H1 (cell line): ENCODE measurements at regions of chrX and their contacts with region 1.

Region 1: DNA sequence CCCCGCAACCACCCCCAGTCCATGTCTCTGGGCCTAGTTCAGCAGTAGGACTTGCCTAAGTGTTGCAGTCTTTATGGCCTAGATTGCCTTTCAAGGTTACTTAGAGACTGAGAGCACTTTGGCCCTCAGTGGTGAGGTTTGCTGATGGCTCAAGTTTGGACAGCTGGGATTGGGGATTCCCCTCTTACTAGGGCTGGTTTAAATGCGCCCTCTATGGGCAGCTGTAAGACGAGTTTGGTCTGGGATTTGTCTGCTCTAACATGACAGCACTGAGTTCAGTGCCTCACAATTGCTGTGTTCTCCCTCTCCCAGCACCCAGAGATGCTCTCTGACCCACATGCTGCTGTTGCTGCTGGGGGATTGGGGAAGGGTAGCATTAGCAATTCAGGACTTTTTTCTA is 23.1 kb downstream of the DACH2 start:
- DNase-seq: peak; percentile 23 to 44
- H3K4me3 ChIP-seq: no peak overlapping the region
- H3K27ac ChIP-seq: no peak overlapping the region
- H3K4me1 ChIP-seq: no peaks in the 10 kb centered on the region
- H3K27me3 ChIP-seq: no peaks in the 10 kb centered on the region
- CTCF ChIP-seq: peak; percentile 44 to 70 (median 59)
- EP300 ChIP-seq: no peak
- POLR2A ChIP-seq: no peak
- RAD21 ChIP-seq: peak; percentile 66 to 76

Region 2: DNA sequence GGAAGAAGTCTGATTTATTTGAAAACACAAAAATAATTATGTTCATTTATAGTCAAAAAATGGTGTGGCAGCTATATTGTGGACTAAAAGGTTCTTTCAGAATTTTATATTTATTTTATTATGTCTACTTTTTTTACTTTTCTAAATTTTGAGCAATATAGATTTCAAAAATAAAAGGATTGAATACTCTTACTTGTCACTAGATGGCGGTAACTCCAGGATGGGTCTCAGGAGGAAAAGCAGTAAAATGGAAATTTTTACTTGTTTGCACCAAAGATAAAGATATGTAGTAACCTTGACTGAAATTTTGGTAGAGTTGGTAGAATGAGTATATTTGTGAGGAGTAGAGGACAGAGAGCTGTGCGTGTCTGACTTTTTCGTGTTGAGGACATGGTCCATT is 37.6 kb before region 1 on chrX:
- CTCF ChIA-PET with region 1: interaction called, 14 read pairs
- POLR2A ChIA-PET with region 1: no interaction called
- DNase-seq: no peak
- H3K4me3 ChIP-seq: no peak overlapping the region
- H3K27ac ChIP-seq: no peak overlapping the region
- H3K4me1 ChIP-seq: no peaks in the 10 kb centered on the region
- H3K27me3 ChIP-seq: no peaks in the 10 kb centered on the region
- CTCF ChIP-seq: peak in 1 of 3 experiments; percentile 7; a peak in 2 of 4 replicates
- EP300 ChIP-seq: no peak
- POLR2A ChIP-seq: no peak
- RAD21 ChIP-seq: peak in 1 of 2 experiments; percentile 27; a peak in 2 of 4 replicates

Region 3: GRCh38 chrX:86149119-86149518 is 22.2 kb before region 1 on chrX:
- CTCF ChIA-PET with region 1: interaction called, 12 read pairs
- POLR2A ChIA-PET with region 1: no interaction called
- DNase-seq: no peak
- H3K4me3 ChIP-seq: peak overlapping the region; percentile 41 to 71 (median 62)
- H3K27ac ChIP-seq: no peak overlapping the region
- H3K4me1 ChIP-seq: no peaks in the 10 kb centered on the region; a peak in 2 of 7 replicates
- H3K27me3 ChIP-seq: peaks cover 3 to 32% (median 22%) of the 10 kb centered on the region in 4 experiments; a peak in 6 of 7 replicates
- CTCF ChIP-seq: no peak
- EP300 ChIP-seq: no peak
- POLR2A ChIP-seq: no peak
- RAD21 ChIP-seq: no peak

Region 4: DNA sequence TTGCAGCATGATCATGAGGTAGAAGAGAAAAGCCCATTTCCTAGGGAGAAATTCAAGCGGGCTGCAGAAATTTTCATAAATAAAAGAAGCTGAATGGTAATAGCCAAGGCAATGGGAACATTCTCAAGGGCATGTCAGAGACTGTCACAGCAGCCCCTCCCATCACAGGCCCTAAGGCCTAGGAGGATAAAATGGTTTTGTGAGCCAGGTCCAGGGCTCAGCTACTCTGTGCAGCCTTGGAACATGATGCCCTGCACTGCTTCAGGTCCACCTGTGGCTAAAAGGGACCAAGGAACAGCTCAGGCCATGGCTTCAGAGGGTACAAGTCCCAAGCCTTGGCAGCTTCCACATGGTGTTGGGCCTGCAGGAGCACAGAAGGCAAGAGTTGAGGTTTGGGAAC is 70.2 kb after region 1 on chrX:
- CTCF ChIA-PET with region 1: no interaction called
- POLR2A ChIA-PET with region 1: no interaction called
- DNase-seq: no peak
- H3K4me3 ChIP-seq: no peak overlapping the region
- H3K27ac ChIP-seq: no peak overlapping the region
- H3K4me1 ChIP-seq: no peaks in the 10 kb centered on the region
- H3K27me3 ChIP-seq: no peaks in the 10 kb centered on the region
- CTCF ChIP-seq: no peak
- EP300 ChIP-seq: no peak
- POLR2A ChIP-seq: no peak
- RAD21 ChIP-seq: no peak